ENCODE measurements at regions of chr13 and their contacts with region 1.

Region 1: GRCh38 chr13:30865123-30866049 is 40.7 kb upstream of the MEDAG start:
- DNase-seq: no peak
- ATAC-seq: peak; percentile 98
- H3K4me3 ChIP-seq: no peak overlapping the region
- H3K27ac ChIP-seq: peak overlapping the region; percentile 93
- H3K4me1 ChIP-seq: peaks cover 25% of the 10 kb centered on the region
- H3K27me3 ChIP-seq: no peaks in the 10 kb centered on the region
- CTCF ChIP-seq: peak; percentile 89

Region 2: DNA sequence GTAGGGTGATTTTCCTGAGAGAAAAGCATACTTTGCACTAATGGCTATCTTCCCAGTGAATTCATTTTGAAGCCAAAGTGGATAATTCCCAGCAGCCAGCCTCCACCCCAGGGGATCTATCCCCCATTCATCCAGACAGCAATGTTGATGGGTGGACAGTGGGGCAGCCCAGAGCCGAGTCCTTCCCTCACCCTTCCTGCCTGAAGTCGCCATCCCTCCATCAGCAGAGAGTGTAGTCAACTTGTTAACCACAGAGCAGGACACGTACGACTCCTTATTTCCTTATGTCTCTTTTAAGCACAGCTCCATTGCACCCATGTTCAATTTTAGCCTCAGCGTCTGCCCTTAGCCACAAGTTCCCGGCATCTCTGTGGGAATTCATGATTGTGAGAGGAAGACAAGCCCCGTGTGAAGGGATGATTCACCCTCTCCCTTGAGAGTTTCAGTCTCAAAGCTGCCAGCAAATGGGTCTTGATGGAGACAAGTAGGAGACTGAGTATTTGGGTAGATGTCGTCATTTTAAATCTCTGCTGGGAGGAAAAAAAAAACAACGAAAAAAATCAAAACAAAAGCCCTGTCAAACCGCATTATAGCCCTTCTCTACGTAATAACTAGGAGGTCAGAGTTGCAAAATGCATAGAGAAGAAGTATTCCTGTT is 17.6 kb before region 1 on chr13:
- CTCF ChIA-PET with region 1: interaction called, 11 read pairs
- POLR2A ChIA-PET with region 1: no interaction called
- in situ Hi-C with region 1: no loop called
- intact Hi-C with region 1: no loop called
- DNase-seq: no peak
- ATAC-seq: no peak
- H3K4me3 ChIP-seq: no peak overlapping the region
- H3K27ac ChIP-seq: peak overlapping the region; percentile 66
- H3K4me1 ChIP-seq: peaks cover 18% of the 10 kb centered on the region
- H3K27me3 ChIP-seq: no peaks in the 10 kb centered on the region
- CTCF ChIP-seq: no peak

Region 3: GRCh38 chr13:30908416-30908980 is 43.1 kb after region 1 on chr13:
- CTCF ChIA-PET with region 1: no interaction called
- POLR2A ChIA-PET with region 1: interaction called, 13 read pairs
- in situ Hi-C with region 1: no loop called
- intact Hi-C with region 1: no loop called
- DNase-seq: no peak
- ATAC-seq: no peak
- H3K4me3 ChIP-seq: no peak overlapping the region
- H3K27ac ChIP-seq: no peak overlapping the region
- H3K4me1 ChIP-seq: peaks cover 8% of the 10 kb centered on the region
- H3K27me3 ChIP-seq: peaks cover 10% of the 10 kb centered on the region
- CTCF ChIP-seq: no peak

Measured in Panc1 (cell line).